ENCODE measurements at regions of chr10 and their contacts with region 1.

Region 1: GRCh38 chr10:36171953-36172940 is 530.2 kb upstream of the FZD8 start:
- DNase-seq: peak; percentile 95
- H3K4me3 ChIP-seq: peak overlapping the region in 1 of 3 experiments; percentile 22
- H3K27ac ChIP-seq: peak overlapping the region; percentile 97
- H3K4me1 ChIP-seq: peaks cover 38% of the 10 kb centered on the region
- H3K27me3 ChIP-seq: no peaks in the 10 kb centered on the region
- CTCF ChIP-seq: no peak
- POLR2A ChIP-seq: no peak

Region 2: GRCh38 chr10:35778306-35778705 is 393.9 kb before region 1 on chr10:
- CTCF ChIA-PET with region 1: no interaction called
- POLR2A ChIA-PET with region 1: no interaction called
- dilution Hi-C with region 1: no loop called
- intact Hi-C with region 1: no loop called
- DNase-seq: peak; percentile 16
- H3K4me3 ChIP-seq: no peak overlapping the region
- H3K27ac ChIP-seq: no peak overlapping the region
- H3K4me1 ChIP-seq: no peaks in the 10 kb centered on the region
- H3K27me3 ChIP-seq: peaks cover 13 to 19% of the 10 kb centered on the region in 2 experiments
- CTCF ChIP-seq: no peak
- POLR2A ChIP-seq: no peak

Region 3: DNA sequence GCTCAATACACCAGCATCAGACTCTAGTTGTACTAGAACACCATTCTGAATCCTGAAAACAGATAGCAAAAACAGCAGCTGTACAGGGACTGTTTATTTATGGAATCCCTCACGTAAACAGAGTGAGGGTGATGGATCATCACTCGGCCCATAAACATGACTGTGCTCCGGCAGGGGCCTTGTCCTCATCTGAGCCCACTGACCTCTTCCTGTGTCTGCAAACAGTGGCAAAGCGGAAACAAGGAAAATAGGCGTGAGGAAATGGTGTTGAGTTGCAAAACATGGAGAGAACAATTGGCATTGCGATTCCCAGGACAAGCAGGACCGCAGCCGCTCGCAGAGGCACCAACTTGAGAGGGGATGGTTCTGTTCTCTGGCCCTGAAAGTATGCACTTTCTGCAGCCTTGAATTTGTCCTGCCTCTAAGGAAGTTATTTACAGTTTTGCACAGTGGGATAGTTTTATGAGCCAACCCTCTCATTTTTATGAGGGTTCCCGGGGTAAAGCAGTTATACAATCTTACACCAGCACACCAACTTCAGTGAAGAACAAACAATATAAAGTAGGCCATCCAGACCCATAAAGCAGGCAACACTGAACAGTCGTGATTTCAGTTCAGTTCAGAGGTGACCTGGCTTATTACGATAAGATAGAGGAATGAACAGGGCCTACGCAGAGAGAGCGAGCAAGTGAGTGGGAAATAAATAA is 282.1 kb before region 1 on chr10:
- CTCF ChIA-PET with region 1: no interaction called
- POLR2A ChIA-PET with region 1: no interaction called
- dilution Hi-C with region 1: no loop called
- intact Hi-C with region 1: loop called (anchors 2 kb)
- DNase-seq: peak; percentile 85
- H3K4me3 ChIP-seq: no peak overlapping the region
- H3K27ac ChIP-seq: peak overlapping the region; percentile 58
- H3K4me1 ChIP-seq: peaks cover 19% of the 10 kb centered on the region
- H3K27me3 ChIP-seq: peaks cover 0 to 2% of the 10 kb centered on the region in 2 experiments
- CTCF ChIP-seq: no peak
- POLR2A ChIP-seq: no peak

Region 4: DNA sequence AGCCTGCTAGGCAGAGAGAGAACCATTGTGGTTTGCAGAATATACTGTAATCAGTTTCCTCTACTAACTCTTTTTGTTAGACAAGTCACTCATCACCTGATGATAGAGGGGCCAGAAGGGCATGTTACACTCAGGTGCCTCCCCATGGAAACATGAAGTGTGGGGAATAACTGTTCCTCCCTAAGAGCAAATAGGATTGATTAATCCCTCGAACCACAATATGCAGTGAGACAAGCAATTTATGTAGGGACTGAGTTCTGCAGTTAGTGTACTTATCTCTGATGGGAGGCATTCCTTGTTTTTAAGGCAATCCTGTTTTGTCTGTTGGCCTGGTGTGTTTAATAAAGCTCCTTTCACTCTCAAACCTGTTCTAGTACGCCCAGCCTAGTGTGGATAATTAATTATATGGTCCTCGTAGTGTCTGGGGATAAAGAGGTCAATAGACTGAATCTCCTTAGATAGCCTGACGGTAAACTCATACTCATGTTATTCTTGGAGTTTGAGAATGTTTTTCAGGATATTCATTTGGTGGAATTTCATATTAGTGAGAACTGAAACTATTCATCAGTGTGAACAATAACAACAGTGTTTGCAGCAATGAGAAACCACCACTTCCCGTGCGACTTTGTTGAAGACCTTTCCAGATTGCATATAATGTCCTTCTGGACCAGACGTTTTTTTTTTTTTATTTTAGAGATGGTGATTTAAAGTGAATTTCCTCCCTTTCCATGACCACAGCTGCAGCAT is 185.3 kb before region 1 on chr10:
- CTCF ChIA-PET with region 1: no interaction called
- POLR2A ChIA-PET with region 1: no interaction called
- dilution Hi-C with region 1: no loop called
- intact Hi-C with region 1: loop called (anchors 2 kb)
- DNase-seq: peak; percentile 90
- H3K4me3 ChIP-seq: no peak overlapping the region
- H3K27ac ChIP-seq: no peak overlapping the region
- H3K4me1 ChIP-seq: peaks cover 10% of the 10 kb centered on the region
- H3K27me3 ChIP-seq: no peaks in the 10 kb centered on the region
- CTCF ChIP-seq: no peak
- POLR2A ChIP-seq: no peak

Region 5: DNA sequence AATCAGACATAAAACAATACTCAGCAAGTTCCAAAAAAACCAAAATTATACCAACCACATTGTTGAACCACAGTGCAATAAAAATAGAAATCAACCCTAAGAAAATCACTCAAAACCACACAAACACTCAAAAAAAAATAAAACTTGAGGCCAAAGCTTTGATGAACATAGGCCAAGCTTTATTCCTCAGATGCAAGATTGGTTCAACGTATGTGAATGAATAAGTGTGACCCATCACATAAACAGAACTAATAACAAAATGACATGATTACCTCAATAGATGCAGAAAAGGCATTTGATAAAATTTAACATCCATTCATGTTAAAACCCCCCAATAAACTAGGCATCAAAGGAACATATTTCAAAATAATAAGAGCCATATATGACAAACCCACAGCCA is 24.0 kb before region 1 on chr10:
- CTCF ChIA-PET with region 1: no interaction called
- POLR2A ChIA-PET with region 1: no interaction called
- dilution Hi-C with region 1: no loop called
- intact Hi-C with region 1: no loop called
- DNase-seq: no peak
- H3K4me3 ChIP-seq: no peak overlapping the region
- H3K27ac ChIP-seq: no peak overlapping the region
- H3K4me1 ChIP-seq: no peaks in the 10 kb centered on the region
- H3K27me3 ChIP-seq: no peaks in the 10 kb centered on the region
- CTCF ChIP-seq: no peak
- POLR2A ChIP-seq: no peak

Region 6: DNA sequence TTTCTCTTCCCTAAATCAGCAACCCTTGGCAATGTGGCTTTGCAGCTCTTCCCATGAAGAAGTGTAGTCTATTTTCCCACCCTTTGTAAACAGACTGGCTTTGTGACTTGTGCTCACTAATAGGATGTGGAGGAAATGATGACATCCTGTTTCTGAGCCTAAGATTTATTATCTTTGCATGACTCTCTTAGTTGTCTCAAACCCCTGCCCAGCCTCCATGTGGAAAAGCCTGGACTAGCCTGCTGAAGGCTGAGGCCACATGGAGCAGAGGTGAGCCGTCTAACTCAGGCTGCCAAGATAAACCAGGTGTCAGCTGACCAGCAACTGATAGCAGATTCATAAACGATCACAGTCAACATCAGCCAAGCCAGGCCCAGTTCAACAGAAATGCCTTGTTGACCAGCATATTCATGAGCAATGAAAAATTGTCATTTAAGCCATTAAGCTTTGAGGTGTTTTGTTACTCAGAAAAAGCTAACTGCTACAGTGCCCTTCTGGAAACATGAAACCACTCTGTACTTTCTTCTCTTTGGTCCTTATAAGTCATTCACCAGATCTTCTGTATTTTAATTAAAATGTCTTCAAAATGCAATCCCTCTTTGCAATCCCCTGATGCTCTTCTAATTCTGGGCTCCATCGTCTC is 366.8 kb after region 1 on chr10:
- CTCF ChIA-PET with region 1: interaction called, 3 read pairs
- POLR2A ChIA-PET with region 1: interaction called, 3 read pairs
- dilution Hi-C with region 1: no loop called
- intact Hi-C with region 1: loop called (anchors 1 kb)
- DNase-seq: peak; percentile 100
- H3K4me3 ChIP-seq: no peak overlapping the region
- H3K27ac ChIP-seq: peak overlapping the region; percentile 63
- H3K4me1 ChIP-seq: peaks cover 30% of the 10 kb centered on the region
- H3K27me3 ChIP-seq: no peaks in the 10 kb centered on the region
- CTCF ChIP-seq: peak; percentile 14 to 16
- POLR2A ChIP-seq: peak; percentile 57

Region 7: DNA sequence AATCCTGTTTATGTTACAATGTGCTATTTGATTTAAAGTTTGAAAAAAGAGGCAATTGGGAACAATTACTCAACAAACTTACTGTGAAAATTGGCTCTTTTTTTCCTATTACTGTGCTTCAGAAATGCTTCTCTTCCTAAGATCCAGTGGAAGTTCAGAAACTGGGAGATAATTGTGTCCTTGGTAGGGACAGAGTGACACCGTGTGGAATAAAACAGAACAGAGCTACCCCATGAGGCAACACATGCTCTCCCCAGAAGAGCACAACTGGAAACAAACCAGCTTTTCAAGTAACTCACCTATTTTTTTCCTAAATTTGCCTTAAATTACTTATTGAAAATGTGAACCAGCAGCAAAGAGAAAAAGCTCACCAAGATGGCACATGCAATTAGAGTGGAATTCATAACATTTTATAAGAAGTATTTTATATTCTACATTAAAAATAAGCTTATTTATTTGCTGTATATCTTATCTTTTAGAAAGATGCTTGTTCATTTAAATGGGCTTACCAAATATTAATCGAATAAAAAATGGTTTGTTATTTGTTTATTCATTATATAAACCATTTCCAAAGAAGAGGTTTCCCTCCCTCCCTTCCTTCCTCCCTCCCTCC is 607.1 kb after region 1 on chr10:
- CTCF ChIA-PET with region 1: interaction called, 7 read pairs
- POLR2A ChIA-PET with region 1: no interaction called
- dilution Hi-C with region 1: no loop called
- intact Hi-C with region 1: loop called (anchors 2 kb)
- DNase-seq: peak; percentile 87
- H3K4me3 ChIP-seq: no peak overlapping the region
- H3K27ac ChIP-seq: no peak overlapping the region
- H3K4me1 ChIP-seq: no peaks in the 10 kb centered on the region
- H3K27me3 ChIP-seq: no peaks in the 10 kb centered on the region
- CTCF ChIP-seq: peak; percentile 57 to 64
- POLR2A ChIP-seq: no peak